ENCODE measurements at regions of chr4 and their contacts with region 1.

Region 1: GRCh38 chr4:38319456-38320342 is 344.3 kb upstream of the KLF3 start:
- DNase-seq: peak; percentile 90
- H3K4me3 ChIP-seq: peak overlapping the region; percentile 43
- H3K27ac ChIP-seq: peak overlapping the region; percentile 77
- H3K4me1 ChIP-seq: peaks cover 24% of the 10 kb centered on the region
- H3K27me3 ChIP-seq: no peaks in the 10 kb centered on the region

Region 2: GRCh38 chr4:38078590-38079421 is 240.9 kb before region 1 on chr4:
- in situ Hi-C with region 1: loop called (anchors 10 kb)
- DNase-seq: peak; percentile 88
- H3K4me3 ChIP-seq: no peak overlapping the region
- H3K27ac ChIP-seq: peak overlapping the region; percentile 75
- H3K4me1 ChIP-seq: peaks cover 49% of the 10 kb centered on the region
- H3K27me3 ChIP-seq: no peaks in the 10 kb centered on the region

Region 3: DNA sequence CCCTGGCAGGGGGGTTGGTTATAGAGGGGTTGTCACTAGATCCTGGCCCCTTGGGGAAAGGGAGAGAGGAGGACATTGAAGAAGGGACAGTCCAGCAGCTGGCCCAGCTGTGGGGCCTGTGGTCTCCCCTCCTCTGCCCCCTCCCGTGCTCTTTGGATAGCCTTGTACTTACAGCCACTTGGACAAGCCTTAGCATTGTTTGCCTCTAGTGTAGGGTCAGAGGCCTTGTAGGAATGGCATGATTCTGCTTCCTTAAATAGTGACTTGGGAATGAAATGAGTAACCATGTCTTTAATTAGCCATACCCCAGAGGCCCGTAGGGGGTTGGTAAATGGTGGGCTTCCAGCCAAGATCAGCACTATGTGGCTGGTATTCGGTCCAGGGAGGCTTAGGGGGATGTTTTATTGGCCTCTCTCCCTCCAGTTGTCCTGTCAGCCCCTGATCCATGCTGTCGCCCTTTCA is 129.0 kb before region 1 on chr4:
- in situ Hi-C with region 1: loop called (anchors 10 kb)
- DNase-seq: peak; percentile 62
- H3K4me3 ChIP-seq: no peak overlapping the region
- H3K27ac ChIP-seq: peak overlapping the region; percentile 45
- H3K4me1 ChIP-seq: peaks cover 23% of the 10 kb centered on the region
- H3K27me3 ChIP-seq: no peaks in the 10 kb centered on the region

Region 4: DNA sequence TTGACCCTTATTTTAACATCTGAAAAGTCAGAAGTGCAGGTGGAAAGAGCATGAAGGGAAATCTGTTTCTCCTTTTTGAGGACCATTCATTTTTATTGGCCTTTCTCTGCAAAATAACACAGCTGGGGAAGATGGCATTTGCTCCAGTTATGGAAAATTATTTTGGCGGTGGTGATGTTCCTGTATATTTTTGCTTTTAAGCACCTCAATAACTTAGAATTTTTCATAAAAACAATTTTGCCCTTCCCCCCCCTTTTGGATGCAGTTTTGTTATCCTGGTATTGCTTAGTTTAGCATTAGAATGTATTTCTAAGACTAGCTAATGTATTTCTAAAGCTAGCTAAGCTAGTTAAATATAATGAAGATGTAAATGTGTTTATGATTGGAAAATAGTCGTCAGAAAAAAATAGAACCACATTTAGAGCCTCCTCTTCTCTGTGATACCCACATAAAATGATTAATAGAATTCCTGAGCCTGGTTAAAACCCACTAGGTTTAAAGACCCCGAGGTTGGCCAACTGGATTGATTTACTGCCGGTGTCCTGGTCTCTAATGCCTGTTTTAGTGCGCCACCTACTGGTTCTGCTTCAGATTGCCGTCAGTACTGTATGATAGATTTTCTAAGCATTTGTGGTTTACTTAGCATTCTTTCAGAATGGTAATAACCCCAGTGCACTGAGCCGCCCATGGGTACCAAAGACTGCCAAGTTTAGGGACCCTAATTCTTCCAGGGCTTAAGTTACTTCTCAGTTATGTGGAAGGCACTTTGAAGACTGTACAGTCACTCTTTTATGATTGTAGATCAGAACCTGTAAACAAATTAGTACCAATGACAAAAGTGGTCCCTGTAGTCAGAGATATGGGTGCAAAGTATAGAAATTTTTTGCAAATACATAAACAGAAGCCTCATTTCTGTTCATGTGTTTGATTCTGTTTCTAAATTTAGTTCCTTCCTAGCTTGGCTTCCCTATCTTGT is 355.7 kb after region 1 on chr4:
- in situ Hi-C with region 1: loop called (anchors 5 kb)
- DNase-seq: peak; percentile 80
- H3K4me3 ChIP-seq: 0 out of 2 replicates have a peak overlapping the region, but pooled peaks have one; percentile 18
- H3K27ac ChIP-seq: peak overlapping the region; percentile 27
- H3K4me1 ChIP-seq: peaks cover 86% of the 10 kb centered on the region
- H3K27me3 ChIP-seq: no peaks in the 10 kb centered on the region

Measured in GM23248 (cell line).